Posterior cingulate gyrus (tissue), 11 donors: ENCODE measurements at regions of chr10 and their contacts with region 1.

Region 1: DNA sequence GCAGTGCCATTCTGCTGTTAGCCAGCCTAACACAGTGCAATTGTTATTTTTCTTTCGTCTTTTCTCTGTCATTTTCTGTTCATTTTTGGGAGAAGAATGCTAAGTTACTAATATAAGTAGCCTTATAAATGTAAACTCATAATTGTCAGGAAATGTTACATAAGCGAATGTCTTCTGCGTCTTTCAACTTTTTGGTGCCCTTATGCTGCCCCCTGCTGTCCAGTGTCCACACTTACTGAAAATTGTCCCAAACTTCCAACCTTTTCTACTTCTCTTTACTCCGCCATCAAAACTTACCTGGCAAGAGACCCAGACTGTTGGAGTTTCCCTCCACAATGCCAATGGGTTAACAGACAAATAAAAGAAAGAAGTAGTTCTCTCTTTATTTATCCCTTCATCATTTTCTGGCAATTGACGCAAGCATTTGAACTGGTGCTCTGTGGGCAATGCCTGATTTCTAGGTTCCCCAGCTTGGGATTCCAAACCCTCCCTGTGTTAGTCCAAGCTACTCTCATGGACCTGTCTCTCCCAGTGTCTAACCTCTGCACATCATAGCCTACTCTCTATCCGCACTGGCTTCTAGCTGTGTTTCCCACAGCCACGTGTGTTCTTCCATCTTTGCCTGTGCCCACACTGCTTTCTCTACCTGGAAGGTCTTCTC is 21.0 kb upstream of the EPC1 start:
- DNase-seq: peak in 8 of 10 donors; percentile 32 to 92 (median 71)

Region 2: GRCh38 chr10:32190890-32191491 is 176.9 kb before region 1 on chr10:
- intact Hi-C with region 1: loop called (anchors 2 kb)
- DNase-seq: no peak

Region 3: GRCh38 chr10:32256613-32257437 is 111.1 kb before region 1 on chr10:
- intact Hi-C with region 1: loop called (anchors 1 kb)
- DNase-seq: peak in 7 of 10 donors; percentile 28 to 93 (median 71)

Region 4: DNA sequence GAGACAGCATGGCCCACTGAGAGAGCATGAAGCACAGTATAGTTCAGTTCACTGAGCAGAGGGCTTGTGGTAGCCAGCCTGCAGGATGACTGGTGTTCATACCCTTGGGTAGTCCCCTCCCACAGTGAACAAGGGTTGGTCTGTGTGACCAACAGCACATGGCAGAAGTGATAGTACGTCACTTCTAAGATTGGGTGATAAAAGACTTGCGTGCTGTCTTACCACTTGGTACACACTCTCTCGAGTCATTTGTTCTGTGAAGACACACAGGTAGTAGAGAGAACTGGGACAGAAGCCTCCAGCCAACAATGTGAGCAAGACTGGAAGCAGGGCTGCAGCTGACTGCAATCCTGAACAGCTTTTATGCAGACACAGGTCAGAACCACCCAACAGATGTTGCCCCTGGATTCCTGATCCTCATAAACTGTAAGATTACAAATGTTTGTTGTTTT is 35.6 kb before region 1 on chr10:
- intact Hi-C with region 1: no loop called
- DNase-seq: peak in 2 of 10 donors; percentile 15 to 63